ENCODE measurements at regions of chr12 and their contacts with region 1.

Region 1: DNA sequence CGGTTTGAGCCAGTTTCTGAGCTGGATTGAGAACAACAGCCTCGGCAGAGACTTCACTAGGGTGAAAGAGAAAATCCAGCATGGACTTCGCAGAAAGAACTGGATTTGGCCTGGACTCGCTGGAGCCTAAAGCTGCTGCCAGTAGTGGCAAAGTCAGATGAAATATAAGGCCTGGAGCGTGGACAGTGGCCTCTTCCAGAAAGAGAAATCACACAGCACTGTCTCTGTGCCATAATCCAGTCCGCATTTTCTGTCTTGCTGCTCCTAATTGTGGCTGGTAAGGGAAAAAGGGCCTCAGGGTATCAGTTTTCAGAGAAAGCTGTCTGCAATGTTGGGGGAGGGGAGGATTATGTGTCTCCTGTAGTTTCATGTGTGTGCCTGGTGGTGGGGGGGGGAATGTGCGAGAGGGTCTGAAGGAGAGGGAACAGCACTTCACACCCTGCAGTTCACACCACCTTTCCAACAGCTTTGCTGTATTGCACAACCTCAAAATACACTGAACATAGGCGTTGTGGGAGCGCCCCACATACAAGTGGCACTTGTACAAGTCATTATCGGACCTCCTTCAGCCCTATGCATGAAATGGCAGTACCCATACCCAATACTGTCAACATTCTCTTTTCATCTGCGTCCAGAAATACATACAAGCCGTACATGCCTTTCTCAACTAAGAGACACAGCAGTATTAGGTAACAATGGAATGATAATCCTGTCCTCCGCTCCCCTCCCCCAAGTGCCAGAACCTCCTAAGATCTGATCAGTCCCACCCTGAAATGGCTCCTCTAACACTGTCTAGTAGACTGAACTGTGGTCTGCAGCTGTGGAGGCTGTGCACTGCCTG is 107.5 kb upstream of the ATF7IP start:
- DNase-seq: peak; percentile 87 to 91 (median 88)
- H3K4me3 ChIP-seq: peak overlapping the region in 1 of 3 experiments; percentile 58
- H3K4me3 Mint-ChIP-seq: peak overlapping the region; percentile 64 to 66
- H3K27ac ChIP-seq: peak overlapping the region; percentile 77 to 90
- H3K27ac Mint-ChIP-seq: peak overlapping the region; percentile 93 to 99 (median 98)
- H3K4me1 ChIP-seq: peaks cover 80 to 87% of the 10 kb centered on the region in 2 donors
- H3K4me1 Mint-ChIP-seq: peaks cover 82% of the 10 kb centered on the region
- H3K27me3 ChIP-seq: no peaks in the 10 kb centered on the region
- H3K27me3 Mint-ChIP-seq: peaks cover 0 to 3% (median 0%) of the 10 kb centered on the region in 3 donors
- CTCF ChIP-seq: no peak

Region 2: GRCh38 chr12:14239350-14239934 is 18.5 kb before region 1 on chr12:
- intact Hi-C with region 1: no loop called
- DNase-seq: peak; percentile 62 to 73 (median 71)
- H3K4me3 ChIP-seq: peak overlapping the region; percentile 53 to 91 (median 84)
- H3K4me3 Mint-ChIP-seq: peak overlapping the region; percentile 77 to 86
- H3K27ac ChIP-seq: peak overlapping the region; percentile 69 to 86
- H3K27ac Mint-ChIP-seq: peak overlapping the region; percentile 79 to 96 (median 91)
- H3K4me1 ChIP-seq: peaks cover 21 to 27% of the 10 kb centered on the region in 2 donors
- H3K4me1 Mint-ChIP-seq: peaks cover 21% of the 10 kb centered on the region
- H3K27me3 ChIP-seq: no peaks in the 10 kb centered on the region
- H3K27me3 Mint-ChIP-seq: peaks cover 0 to 3% (median 1%) of the 10 kb centered on the region in 3 donors
- CTCF ChIP-seq: no peak

Region 3: GRCh38 chr12:14275886-14276285 is 17.9 kb after region 1 on chr12:
- intact Hi-C with region 1: loop called in 1 of 2 experiments (anchors 1 kb)
- DNase-seq: peak; percentile 60 to 75 (median 75)
- H3K4me3 ChIP-seq: peak overlapping the region in 1 of 3 experiments; percentile 3
- H3K4me3 Mint-ChIP-seq: peak overlapping the region in 1 of 2 donors; percentile 20
- H3K27ac ChIP-seq: peak overlapping the region in 1 of 2 donors; percentile 95
- H3K27ac Mint-ChIP-seq: peak overlapping the region; percentile 63 to 91 (median 82)
- H3K4me1 ChIP-seq: peaks cover 37 to 42% of the 10 kb centered on the region in 2 donors
- H3K4me1 Mint-ChIP-seq: peaks cover 35% of the 10 kb centered on the region
- H3K27me3 ChIP-seq: no peaks in the 10 kb centered on the region
- H3K27me3 Mint-ChIP-seq: peaks cover 0 to 3% (median 1%) of the 10 kb centered on the region in 3 donors
- CTCF ChIP-seq: no peak

Region 4: GRCh38 chr12:14303661-14304155 is 45.8 kb after region 1 on chr12:
- intact Hi-C with region 1: no loop called
- DNase-seq: no peak
- H3K4me3 ChIP-seq: no peak overlapping the region
- H3K4me3 Mint-ChIP-seq: no peak overlapping the region
- H3K27ac ChIP-seq: no peak overlapping the region
- H3K27ac Mint-ChIP-seq: peak overlapping the region in 1 of 7 donors; percentile 15
- H3K4me1 ChIP-seq: peaks cover 7 to 8% of the 10 kb centered on the region in 2 donors
- H3K4me1 Mint-ChIP-seq: peaks cover 10% of the 10 kb centered on the region
- H3K27me3 ChIP-seq: no peaks in the 10 kb centered on the region
- H3K27me3 Mint-ChIP-seq: peaks cover 0 to 3% (median 1%) of the 10 kb centered on the region in 3 donors
- CTCF ChIP-seq: no peak

Region 5: DNA sequence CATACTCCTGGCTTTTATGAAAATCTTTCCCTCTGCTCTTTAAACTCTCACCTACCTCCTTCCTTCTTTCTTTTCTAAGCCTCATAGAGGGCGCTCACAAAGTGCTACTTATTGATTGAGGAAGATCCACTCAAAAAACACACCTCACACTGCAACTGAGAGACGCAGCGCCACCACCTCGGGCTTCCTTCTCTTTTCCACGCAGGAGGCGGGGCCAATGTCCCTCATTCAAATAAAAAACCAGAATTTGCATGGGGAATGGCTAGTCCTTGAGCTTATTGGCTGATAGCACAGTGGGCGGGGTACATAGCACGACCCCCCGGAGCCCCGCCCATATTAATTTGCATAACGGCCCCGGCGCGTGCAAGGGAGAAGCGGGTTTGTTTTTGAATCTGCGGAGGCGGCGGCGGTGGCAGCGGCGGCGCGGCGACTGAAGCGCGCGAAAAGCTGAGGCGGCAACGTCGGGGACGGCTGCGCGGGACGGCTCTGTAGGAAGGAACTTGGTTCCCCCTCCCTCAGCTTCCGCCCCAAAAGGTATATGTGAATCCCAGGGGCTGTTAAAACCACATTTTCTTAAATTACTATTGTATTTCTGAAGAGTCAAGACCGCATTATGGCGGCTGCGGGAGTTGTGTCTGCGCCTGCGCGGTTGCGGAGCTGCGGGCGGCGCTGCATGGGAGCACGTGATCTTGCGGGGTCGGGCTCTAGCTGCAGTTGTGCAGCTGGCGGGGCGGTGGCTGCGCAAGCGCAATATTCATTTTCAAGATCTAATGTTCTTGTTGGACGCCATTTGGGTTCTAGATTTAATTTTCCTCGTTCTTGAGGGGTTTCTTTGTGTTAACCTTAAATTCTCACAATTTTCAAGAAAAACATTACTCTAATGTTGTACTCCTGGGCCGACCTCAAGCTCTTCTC is 107.6 kb after region 1 on chr12 and contains the start of gene ATF7IP:
- intact Hi-C with region 1: loop called (anchors 5 kb)
- DNase-seq: peak; percentile 96 to 97 (median 97)
- H3K4me3 ChIP-seq: peak within 1 kb of the TSS; percentile 58 to 86 (median 59)
- H3K4me3 Mint-ChIP-seq: peak within 1 kb of the TSS; percentile 83 to 94
- H3K27ac ChIP-seq: peak within 1 kb of the TSS; percentile 90 to 96
- H3K27ac Mint-ChIP-seq: peak within 1 kb of the TSS; percentile 88 to 99 (median 96)
- H3K4me1 ChIP-seq: peaks cover 7 to 31% of the 10 kb centered on the region in 2 donors
- H3K4me1 Mint-ChIP-seq: peaks cover 19% of the 10 kb centered on the region
- H3K27me3 ChIP-seq: no peaks in the 10 kb centered on the region
- H3K27me3 Mint-ChIP-seq: peaks cover 0 to 2% (median 0%) of the 10 kb centered on the region in 3 donors
- CTCF ChIP-seq: no peak
- polyA plus RNA-seq, gene ATF7IP: 16.6 to 51.7 (median 19.2) TPM

Region 6: DNA sequence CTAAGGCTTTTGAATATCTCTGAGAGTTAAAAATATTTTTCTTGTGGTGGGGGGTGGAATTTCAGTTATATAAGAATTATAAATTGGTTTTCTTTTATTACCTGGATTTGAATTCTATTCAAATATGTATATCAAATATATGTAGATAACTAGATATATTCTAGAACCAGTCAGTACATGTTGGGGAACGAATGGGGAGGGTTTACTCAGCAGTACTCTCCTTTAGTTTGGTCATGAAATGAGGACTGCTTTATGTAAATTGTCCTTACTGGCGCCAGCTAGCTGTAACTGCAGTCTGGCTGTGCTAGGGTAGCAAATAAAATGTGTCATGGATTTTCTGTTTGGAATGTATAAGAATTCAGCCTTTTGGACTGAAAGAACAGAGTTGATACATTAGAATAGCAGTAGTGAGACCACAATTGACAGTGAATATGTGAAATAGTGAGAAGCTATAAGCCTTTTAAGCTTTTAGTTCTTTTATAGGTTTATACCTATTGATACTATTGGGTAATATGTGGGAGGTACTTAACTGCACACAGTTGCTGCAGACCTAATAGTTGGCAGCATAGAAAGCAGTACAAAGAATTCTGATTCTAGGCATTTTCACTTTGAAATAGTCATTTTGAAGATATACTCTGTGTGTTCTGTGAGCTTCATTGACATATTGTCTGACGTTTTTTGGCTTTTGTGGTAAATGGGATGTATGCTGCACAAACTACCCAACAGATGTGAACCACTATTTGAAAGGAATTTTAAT is 136.5 kb after region 1 on chr12:
- intact Hi-C with region 1: loop called in 1 of 2 experiments (anchors 5 kb)
- DNase-seq: peak; percentile 46 to 63 (median 61)
- H3K4me3 ChIP-seq: peak overlapping the region in 1 of 3 experiments; percentile 27
- H3K4me3 Mint-ChIP-seq: peak overlapping the region in 1 of 2 donors; percentile 58
- H3K27ac ChIP-seq: peak overlapping the region in 1 of 2 donors; percentile 5
- H3K27ac Mint-ChIP-seq: peak overlapping the region in 4 of 7 donors; percentile 5 to 84 (median 38)
- H3K4me1 ChIP-seq: peaks cover 10 to 27% of the 10 kb centered on the region in 2 donors
- H3K4me1 Mint-ChIP-seq: peaks cover 27% of the 10 kb centered on the region
- H3K27me3 ChIP-seq: no peaks in the 10 kb centered on the region
- H3K27me3 Mint-ChIP-seq: peaks cover 0 to 2% (median 1%) of the 10 kb centered on the region in 3 donors
- CTCF ChIP-seq: peak; percentile 12

Measured in CD14-positive monocyte (primary cell).